Gastrocnemius medialis (tissue), 4 donors: ENCODE measurements at regions of chr16 and their contacts with region 1.

Region 1: DNA sequence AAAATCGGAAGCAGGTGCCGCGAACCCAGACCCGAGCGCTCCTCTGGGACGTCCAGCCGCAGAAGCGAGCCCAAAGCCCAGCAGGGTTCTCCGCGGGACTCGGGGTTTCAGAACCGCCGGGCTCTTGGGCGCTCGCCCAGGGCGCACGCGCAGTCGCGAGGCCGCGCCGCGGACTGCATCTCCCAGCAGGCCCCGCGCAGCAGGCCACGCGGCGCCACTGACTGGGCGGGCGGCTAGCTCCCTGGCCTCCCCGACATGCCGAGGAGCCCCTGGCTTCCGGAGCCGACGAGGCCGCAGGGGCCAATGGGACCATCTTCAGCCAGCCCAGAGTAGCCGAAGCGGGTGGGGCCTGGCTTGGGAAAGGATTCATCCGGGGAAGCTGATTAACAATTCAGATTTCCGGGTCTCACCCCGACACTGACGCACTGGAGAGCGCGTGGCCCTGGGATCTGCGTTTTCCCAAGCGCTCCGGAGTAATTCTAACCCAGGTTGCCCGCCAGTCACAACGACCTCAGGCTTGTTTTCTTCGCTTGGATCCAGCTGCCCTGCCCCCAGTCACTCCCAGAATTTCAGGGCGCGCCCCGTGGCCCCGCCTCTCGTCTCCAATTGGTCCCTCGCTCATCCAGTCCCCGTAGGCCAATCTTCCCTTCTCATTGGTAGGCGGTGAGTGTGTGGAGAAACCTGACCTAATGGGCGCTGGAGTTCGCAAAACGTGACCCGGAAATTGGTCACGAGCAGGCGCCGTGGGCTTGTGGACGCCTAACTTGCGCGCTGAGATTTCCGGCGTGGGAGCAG is at the start of gene ZNF263:
- DNase-seq: peak; percentile 95 to 97
- ATAC-seq: peak; percentile 99
- H3K4me3 ChIP-seq: peak within 1 kb of the TSS; percentile 72 to 86 (median 80)
- H3K27ac ChIP-seq: peak within 1 kb of the TSS; percentile 98 to 100 (median 99)
- H3K4me1 ChIP-seq: peaks cover 22% of the 10 kb centered on the region in 2 donors
- H3K27me3 ChIP-seq: no peaks in the 10 kb centered on the region
- CTCF ChIP-seq: no peak
- POLR2A ChIP-seq: peak; percentile 66 to 81
- total RNA-seq, gene ZNF263: 13.5 to 18.5 (median 15.5) TPM

Region 2: DNA sequence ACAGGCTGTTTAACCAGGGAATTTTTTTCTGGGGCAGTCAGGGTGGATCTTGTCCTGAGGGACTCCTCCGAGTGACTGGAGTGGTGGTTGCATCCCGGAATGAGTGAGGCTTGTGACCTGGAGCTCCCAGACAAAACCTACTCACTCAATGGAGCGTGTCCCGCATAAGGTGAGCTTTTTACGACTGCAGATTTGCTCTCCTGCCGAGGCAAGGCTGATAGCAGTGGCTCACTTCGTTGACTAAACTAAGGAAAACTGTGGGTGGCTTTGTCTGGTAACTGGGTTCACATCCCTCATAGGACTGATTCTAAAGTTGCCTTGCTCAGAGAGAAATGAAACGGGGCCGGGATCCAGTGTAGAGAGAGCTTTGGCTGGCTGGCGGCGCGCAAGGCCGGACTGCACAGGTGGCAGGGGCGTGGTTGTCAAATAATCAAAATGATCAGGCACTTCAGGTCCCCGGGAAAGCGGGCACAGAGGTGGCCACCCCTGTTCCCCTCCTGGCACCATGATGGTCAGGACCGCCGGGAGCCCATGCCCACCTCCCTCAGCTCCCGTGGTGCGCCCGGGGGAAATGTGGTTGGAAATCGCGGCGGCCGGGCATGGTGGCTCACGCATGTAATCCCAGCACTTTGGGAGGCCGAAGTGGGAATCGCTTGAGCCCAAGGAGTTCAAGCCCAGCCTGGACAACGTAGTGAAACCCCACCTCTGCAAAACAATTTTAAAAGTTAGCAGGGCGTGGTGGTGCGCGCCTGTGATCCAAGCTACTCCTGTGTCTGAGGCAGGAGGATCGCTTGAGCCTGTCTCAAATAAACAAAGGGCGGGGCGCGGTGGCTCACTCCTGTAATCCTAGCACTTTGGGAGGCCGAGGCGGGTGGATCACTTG is 121.5 kb before region 1 on chr16:
- in situ Hi-C with region 1: no loop called
- intact Hi-C with region 1: no loop called
- DNase-seq: no peak
- ATAC-seq: no peak
- H3K4me3 ChIP-seq: no peak overlapping the region
- H3K27ac ChIP-seq: no peak overlapping the region
- H3K4me1 ChIP-seq: peaks cover 8 to 15% of the 10 kb centered on the region in 2 donors
- H3K27me3 ChIP-seq: peaks cover 58 to 62% (median 58%) of the 10 kb centered on the region in 3 donors
- CTCF ChIP-seq: no peak
- POLR2A ChIP-seq: no peak

Region 3: GRCh38 chr16:3234543-3235541 is 48.1 kb before region 1 on chr16 and contains the start of gene ZNF200:
- in situ Hi-C with region 1: no loop called
- intact Hi-C with region 1: loop called (anchors 1 kb)
- DNase-seq: peak; percentile 93 to 94
- ATAC-seq: peak; percentile 99 to 100
- H3K4me3 ChIP-seq: peak within 1 kb of the TSS; percentile 87 to 100 (median 99)
- H3K27ac ChIP-seq: peak within 1 kb of the TSS; percentile 96 to 100 (median 98)
- H3K4me1 ChIP-seq: peaks cover 12% of the 10 kb centered on the region in 2 donors
- H3K27me3 ChIP-seq: no peaks in the 10 kb centered on the region
- CTCF ChIP-seq: no peak
- POLR2A ChIP-seq: peak; percentile 60 to 72
- total RNA-seq, gene ZNF200: 0.49 to 3.2 (median 2.2) TPM

Region 4: GRCh38 chr16:3305109-3306068 is 22.5 kb after region 1 on chr16 and contains the starts of genes TIGD7 and ZNF75A:
- in situ Hi-C with region 1: no loop called
- intact Hi-C with region 1: loop called (anchors 1 kb)
- DNase-seq: peak; percentile 78
- ATAC-seq: peak; percentile 97 to 98
- H3K4me3 ChIP-seq: peak within 1 kb of the TSS; percentile 75 to 83 (median 76)
- H3K27ac ChIP-seq: peak within 1 kb of the TSS; percentile 89 to 94 (median 92)
- H3K4me1 ChIP-seq: peaks cover 13 to 16% of the 10 kb centered on the region in 2 donors
- H3K27me3 ChIP-seq: no peaks in the 10 kb centered on the region
- CTCF ChIP-seq: peak in 4 of 5 experiments; percentile 20 to 35 (median 27)
- POLR2A ChIP-seq: peak; percentile 88 to 93
- total RNA-seq, gene TIGD7: 2.5 to 8.1 (median 4.4) TPM
- total RNA-seq, gene ZNF75A: 5.5 to 13.2 (median 12.5) TPM

Region 5: GRCh38 chr16:3328643-3329042 is 45.7 kb after region 1 on chr16:
- in situ Hi-C with region 1: no loop called
- intact Hi-C with region 1: no loop called
- DNase-seq: no peak
- ATAC-seq: no peak
- H3K4me3 ChIP-seq: no peak overlapping the region
- H3K27ac ChIP-seq: no peak overlapping the region
- H3K4me1 ChIP-seq: no peaks in the 10 kb centered on the region
- H3K27me3 ChIP-seq: no peaks in the 10 kb centered on the region
- CTCF ChIP-seq: no peak
- POLR2A ChIP-seq: no peak

Region 6: GRCh38 chr16:3467921-3468320 is 185.0 kb after region 1 on chr16:
- in situ Hi-C with region 1: no loop called
- intact Hi-C with region 1: no loop called
- DNase-seq: no peak
- ATAC-seq: no peak
- H3K4me3 ChIP-seq: no peak overlapping the region
- H3K27ac ChIP-seq: no peak overlapping the region
- H3K4me1 ChIP-seq: peaks cover 37 to 45% of the 10 kb centered on the region in 2 donors
- H3K27me3 ChIP-seq: no peaks in the 10 kb centered on the region
- CTCF ChIP-seq: no peak
- POLR2A ChIP-seq: no peak

Region 7: DNA sequence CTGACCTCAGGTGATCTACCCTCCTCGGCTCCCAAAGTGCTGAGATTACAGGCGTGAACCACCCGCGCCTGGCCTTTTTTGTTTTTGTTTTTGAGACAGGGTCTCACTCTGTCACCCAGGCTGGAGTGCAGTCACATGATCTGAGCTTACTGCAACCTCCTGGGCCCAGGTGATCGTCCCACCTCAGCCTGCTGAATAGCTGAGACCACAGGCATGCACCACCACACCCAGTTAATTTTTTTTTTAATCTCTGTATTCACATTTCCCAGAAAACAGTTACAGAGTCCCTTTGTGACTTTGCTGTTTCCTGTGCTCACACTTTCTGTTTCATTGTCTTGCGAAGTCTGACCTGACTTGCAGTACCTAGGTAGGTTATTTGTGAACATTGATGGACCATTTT is 220.6 kb after region 1 on chr16:
- in situ Hi-C with region 1: no loop called
- intact Hi-C with region 1: loop called (anchors 1 kb)
- DNase-seq: no peak
- ATAC-seq: no peak
- H3K4me3 ChIP-seq: no peak overlapping the region
- H3K27ac ChIP-seq: no peak overlapping the region
- H3K4me1 ChIP-seq: peaks cover 6 to 15% of the 10 kb centered on the region in 2 donors
- H3K27me3 ChIP-seq: no peaks in the 10 kb centered on the region
- CTCF ChIP-seq: no peak
- POLR2A ChIP-seq: no peak